Activated CD4-positive, alpha-beta memory T cell treated with anti-CD3 and anti-CD28 coated beads for 36 hours (primary cell): ENCODE measurements at regions of chr4 and their contacts with region 1.

Region 1: GRCh38 chr4:42656944-42657792 is at the start of gene ATP8A1:
- DNase-seq: peak; percentile 94
- H3K4me3 Mint-ChIP-seq: peak within 1 kb of the TSS; percentile 89
- H3K27ac Mint-ChIP-seq: peak within 1 kb of the TSS; percentile 95
- H3K4me1 Mint-ChIP-seq: peaks cover 40% of the 10 kb centered on the region
- H3K27me3 Mint-ChIP-seq: no peaks in the 10 kb centered on the region
- total RNA-seq, gene ATP8A1: 23.9 to 24.0 TPM

Region 2: GRCh38 chr4:42543762-42544161 is 113.4 kb before region 1 on chr4:
- CTCF ChIA-PET with region 1: no interaction called
- POLR2A ChIA-PET with region 1: no interaction called
- intact Hi-C with region 1: no loop called
- DNase-seq: no peak
- H3K4me3 Mint-ChIP-seq: no peak overlapping the region
- H3K27ac Mint-ChIP-seq: no peak overlapping the region
- H3K4me1 Mint-ChIP-seq: no peaks in the 10 kb centered on the region
- H3K27me3 Mint-ChIP-seq: no peaks in the 10 kb centered on the region

Region 3: GRCh38 chr4:42568610-42569207 is 88.5 kb before region 1 on chr4:
- CTCF ChIA-PET with region 1: interaction called, 14 read pairs
- POLR2A ChIA-PET with region 1: no interaction called
- intact Hi-C with region 1: no loop called
- DNase-seq: peak; percentile 63
- H3K4me3 Mint-ChIP-seq: no peak overlapping the region
- H3K27ac Mint-ChIP-seq: no peak overlapping the region
- H3K4me1 Mint-ChIP-seq: no peaks in the 10 kb centered on the region
- H3K27me3 Mint-ChIP-seq: no peaks in the 10 kb centered on the region

Region 4: GRCh38 chr4:42579903-42580302 is 77.3 kb before region 1 on chr4:
- CTCF ChIA-PET with region 1: no interaction called
- POLR2A ChIA-PET with region 1: interaction called, 5 read pairs
- intact Hi-C with region 1: loop called (anchors 1 kb)
- DNase-seq: no peak
- H3K4me3 Mint-ChIP-seq: no peak overlapping the region
- H3K27ac Mint-ChIP-seq: peak overlapping the region; percentile 28
- H3K4me1 Mint-ChIP-seq: peaks cover 11% of the 10 kb centered on the region
- H3K27me3 Mint-ChIP-seq: no peaks in the 10 kb centered on the region

Region 5: DNA sequence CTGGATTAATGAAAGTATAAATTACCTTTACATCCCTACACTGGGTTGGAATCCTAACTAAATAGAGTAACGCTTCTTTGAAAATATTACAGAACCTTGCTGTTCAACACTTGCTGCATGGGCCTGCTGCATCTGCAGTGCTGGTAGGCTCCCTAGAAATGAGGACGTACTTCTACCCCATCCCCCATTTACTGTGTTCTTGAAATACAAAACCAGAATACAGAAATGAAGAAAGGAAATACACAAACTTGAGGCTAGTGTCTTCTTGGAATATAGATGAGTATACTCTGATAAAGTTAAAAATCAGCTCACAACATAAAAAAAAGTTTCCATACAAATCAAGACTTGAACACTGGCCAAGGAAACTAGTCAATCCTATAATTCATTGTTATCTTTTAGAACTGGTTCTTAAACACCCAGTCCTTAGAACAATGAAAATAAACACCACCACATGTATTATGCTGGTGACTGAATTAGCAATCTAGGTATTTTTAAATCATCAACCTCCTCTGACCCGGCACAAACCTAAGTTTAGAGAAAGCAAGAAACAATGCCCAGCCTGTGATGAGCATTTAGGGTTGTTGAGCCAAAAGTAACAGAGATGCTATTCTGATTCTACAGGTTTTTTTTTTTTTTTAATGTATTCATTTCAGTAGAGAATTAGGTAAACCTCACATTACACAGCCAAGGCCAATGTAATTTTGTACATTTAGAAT is 50.0 kb before region 1 on chr4:
- CTCF ChIA-PET with region 1: no interaction called
- POLR2A ChIA-PET with region 1: no interaction called
- intact Hi-C with region 1: loop called (anchors 1 kb)
- DNase-seq: no peak
- H3K4me3 Mint-ChIP-seq: no peak overlapping the region
- H3K27ac Mint-ChIP-seq: peak overlapping the region; percentile 20
- H3K4me1 Mint-ChIP-seq: peaks cover 19% of the 10 kb centered on the region
- H3K27me3 Mint-ChIP-seq: no peaks in the 10 kb centered on the region

Region 6: GRCh38 chr4:42627885-42628646 is 29.1 kb before region 1 on chr4:
- CTCF ChIA-PET with region 1: interaction called, 6 read pairs
- POLR2A ChIA-PET with region 1: interaction called, 4 read pairs
- intact Hi-C with region 1: loop called (anchors 1 kb)
- DNase-seq: peak; percentile 49
- H3K4me3 Mint-ChIP-seq: peak overlapping the region; percentile 36
- H3K27ac Mint-ChIP-seq: peak overlapping the region; percentile 83
- H3K4me1 Mint-ChIP-seq: peaks cover 46% of the 10 kb centered on the region
- H3K27me3 Mint-ChIP-seq: no peaks in the 10 kb centered on the region

Region 7: DNA sequence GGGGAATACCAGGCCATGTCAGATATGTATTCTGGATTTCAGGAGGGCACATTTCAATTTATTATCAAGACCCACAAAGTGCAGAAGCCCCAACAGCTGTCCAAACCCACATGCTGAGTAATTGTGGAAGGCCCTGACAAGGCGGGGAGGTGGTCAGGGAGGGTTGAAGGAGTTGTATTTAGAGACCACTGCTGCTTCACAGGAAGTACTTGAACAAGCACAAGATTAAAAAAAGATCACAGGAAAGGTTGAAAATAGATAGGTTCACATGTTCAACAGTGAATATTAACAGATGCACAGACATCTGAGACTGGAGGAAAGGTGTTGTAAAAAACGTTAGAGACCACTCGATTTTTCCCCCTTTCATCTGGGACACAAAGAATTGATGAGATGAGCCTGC is 18.2 kb before region 1 on chr4:
- CTCF ChIA-PET with region 1: interaction called, 6 read pairs
- POLR2A ChIA-PET with region 1: interaction called, 8 read pairs
- intact Hi-C with region 1: loop called (anchors 1 kb)
- DNase-seq: peak; percentile 47
- H3K4me3 Mint-ChIP-seq: no peak overlapping the region
- H3K27ac Mint-ChIP-seq: no peak overlapping the region
- H3K4me1 Mint-ChIP-seq: peaks cover 65% of the 10 kb centered on the region
- H3K27me3 Mint-ChIP-seq: no peaks in the 10 kb centered on the region

Region 8: GRCh38 chr4:42673082-42673425 is 15.9 kb after region 1 on chr4:
- CTCF ChIA-PET with region 1: interaction called, 10 read pairs
- POLR2A ChIA-PET with region 1: interaction called, 23 read pairs
- intact Hi-C with region 1: loop called (anchors 1 kb)
- DNase-seq: peak; percentile 43
- H3K4me3 Mint-ChIP-seq: peak overlapping the region; percentile 20
- H3K27ac Mint-ChIP-seq: peak overlapping the region; percentile 84
- H3K4me1 Mint-ChIP-seq: peaks cover 35% of the 10 kb centered on the region
- H3K27me3 Mint-ChIP-seq: no peaks in the 10 kb centered on the region

Region 9: GRCh38 chr4:42906891-42907759 is 250.0 kb after region 1 on chr4:
- CTCF ChIA-PET with region 1: no interaction called
- POLR2A ChIA-PET with region 1: no interaction called
- intact Hi-C with region 1: no loop called
- DNase-seq: no peak
- H3K4me3 Mint-ChIP-seq: no peak overlapping the region
- H3K27ac Mint-ChIP-seq: no peak overlapping the region
- H3K4me1 Mint-ChIP-seq: no peaks in the 10 kb centered on the region
- H3K27me3 Mint-ChIP-seq: no peaks in the 10 kb centered on the region